B cell (primary cell): ENCODE measurements at regions of chr1 and their contacts with region 1.

Region 1: GRCh38 chr1:9128520-9129265 is at the start of gene GPR157:
- DNase-seq: peak; percentile 90
- ATAC-seq: peak; percentile 88
- H3K4me3 ChIP-seq: peak within 1 kb of the TSS; percentile 44 to 79 (median 61)
- H3K4me3 Mint-ChIP-seq: peak within 1 kb of the TSS; percentile 94
- H3K27ac ChIP-seq: peak within 1 kb of the TSS; percentile 38 to 48
- H3K27ac Mint-ChIP-seq: peak within 1 kb of the TSS; percentile 78
- H3K4me1 ChIP-seq: peaks cover 17 to 29% of the 10 kb centered on the region in 2 donors
- H3K4me1 Mint-ChIP-seq: peaks cover 44% of the 10 kb centered on the region
- H3K27me3 ChIP-seq: no peaks in the 10 kb centered on the region
- H3K27me3 Mint-ChIP-seq: no peaks in the 10 kb centered on the region
- CTCF ChIP-seq: no peak
- total RNA-seq, gene GPR157: 19.9 and 21.2 TPM in 2 replicates

Region 2: GRCh38 chr1:9110669-9111356 is 17.9 kb before region 1 on chr1:
- CTCF ChIA-PET with region 1: interaction called, 12 read pairs
- POLR2A ChIA-PET with region 1: no interaction called
- intact Hi-C with region 1: loop called (anchors 2 kb)
- DNase-seq: peak; percentile 85
- ATAC-seq: peak; percentile 95
- H3K4me3 ChIP-seq: no peak overlapping the region
- H3K4me3 Mint-ChIP-seq: no peak overlapping the region
- H3K27ac ChIP-seq: no peak overlapping the region
- H3K27ac Mint-ChIP-seq: no peak overlapping the region
- H3K4me1 ChIP-seq: peaks cover 0 to 5% of the 10 kb centered on the region in 2 donors
- H3K4me1 Mint-ChIP-seq: peaks cover 2% of the 10 kb centered on the region
- H3K27me3 ChIP-seq: no peaks in the 10 kb centered on the region
- H3K27me3 Mint-ChIP-seq: no peaks in the 10 kb centered on the region
- CTCF ChIP-seq: peak; percentile 91

Region 3: DNA sequence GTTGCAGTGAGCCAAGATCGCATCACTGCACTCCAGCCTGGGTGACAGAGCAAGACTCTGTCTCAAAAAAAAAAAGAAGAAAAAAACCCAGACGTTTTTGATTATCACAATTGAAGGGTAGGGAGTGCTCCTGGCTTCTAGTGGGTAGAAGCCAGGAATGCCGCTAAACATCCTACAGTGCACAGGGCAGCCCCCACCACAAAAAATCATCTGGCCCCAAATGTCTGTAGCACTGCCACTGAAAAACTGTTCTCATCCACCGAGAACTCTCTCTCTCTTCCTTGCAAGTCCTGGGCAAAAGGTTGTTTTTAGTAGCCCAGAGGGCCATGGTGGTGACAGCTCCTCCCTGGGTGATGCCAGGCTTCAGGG is 35.8 kb after region 1 on chr1:
- CTCF ChIA-PET with region 1: interaction called, 4 read pairs
- POLR2A ChIA-PET with region 1: no interaction called
- intact Hi-C with region 1: loop called (anchors 2 kb)
- DNase-seq: no peak
- ATAC-seq: peak; percentile 19
- H3K4me3 ChIP-seq: no peak overlapping the region
- H3K4me3 Mint-ChIP-seq: peak overlapping the region; percentile 81
- H3K27ac ChIP-seq: no peak overlapping the region
- H3K27ac Mint-ChIP-seq: peak overlapping the region; percentile 93
- H3K4me1 ChIP-seq: peaks cover 0 to 20% of the 10 kb centered on the region in 2 donors
- H3K4me1 Mint-ChIP-seq: peaks cover 22% of the 10 kb centered on the region
- H3K27me3 ChIP-seq: no peaks in the 10 kb centered on the region
- H3K27me3 Mint-ChIP-seq: peaks cover 2% of the 10 kb centered on the region
- CTCF ChIP-seq: no peak

Region 4: GRCh38 chr1:9196129-9197040 is 67.7 kb after region 1 on chr1:
- CTCF ChIA-PET with region 1: interaction called, 8 read pairs
- POLR2A ChIA-PET with region 1: no interaction called
- intact Hi-C with region 1: loop called (anchors 5 kb)
- DNase-seq: peak; percentile 81
- ATAC-seq: peak; percentile 78
- H3K4me3 ChIP-seq: no peak overlapping the region
- H3K4me3 Mint-ChIP-seq: peak overlapping the region; percentile 16
- H3K27ac ChIP-seq: no peak overlapping the region
- H3K27ac Mint-ChIP-seq: no peak overlapping the region
- H3K4me1 ChIP-seq: peaks cover 7 to 13% of the 10 kb centered on the region in 2 donors
- H3K4me1 Mint-ChIP-seq: peaks cover 31% of the 10 kb centered on the region
- H3K27me3 ChIP-seq: peaks cover 0 to 38% (median 22%) of the 10 kb centered on the region in 4 experiments
- H3K27me3 Mint-ChIP-seq: peaks cover 32% of the 10 kb centered on the region
- CTCF ChIP-seq: peak; percentile 84

Region 5: DNA sequence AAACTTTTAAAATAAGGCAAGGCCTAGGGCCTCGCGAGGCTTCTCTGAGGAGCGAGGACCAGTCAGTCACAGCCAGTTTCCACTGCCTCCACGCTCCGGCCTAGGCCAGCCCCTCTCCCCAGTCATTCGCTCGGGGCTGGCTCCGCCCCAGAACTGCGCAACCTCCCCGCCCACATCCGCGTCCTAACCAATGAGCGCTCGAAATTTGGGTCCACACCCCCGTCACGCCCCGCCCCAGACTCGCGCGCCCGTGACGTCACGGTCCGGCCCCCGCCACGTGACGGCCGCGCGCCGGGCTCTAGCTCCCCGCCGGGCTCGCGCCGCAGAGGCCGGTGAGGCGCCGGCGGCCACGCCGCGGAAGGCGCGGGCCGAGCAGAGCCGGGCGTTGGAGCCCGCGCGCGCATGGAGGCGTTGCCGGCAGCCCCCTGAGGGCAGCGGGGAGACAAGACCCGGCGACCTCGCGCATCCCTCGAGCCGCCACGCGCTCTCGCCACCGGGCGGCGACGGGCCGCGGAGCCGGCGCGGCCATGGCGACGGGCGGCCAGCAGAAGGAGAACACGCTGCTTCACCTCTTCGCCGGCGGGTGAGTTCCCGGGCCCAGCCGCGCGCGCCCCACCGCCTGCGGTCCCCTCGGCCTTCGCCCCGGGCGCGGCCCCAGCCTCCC is 410.6 kb after region 1 on chr1 and contains the start of gene SLC25A33:
- CTCF ChIA-PET with region 1: no interaction called
- POLR2A ChIA-PET with region 1: no interaction called
- intact Hi-C with region 1: loop called (anchors 1 kb)
- DNase-seq: peak; percentile 99
- ATAC-seq: peak; percentile 97
- H3K4me3 ChIP-seq: peak within 1 kb of the TSS; percentile 24 to 80 (median 73)
- H3K4me3 Mint-ChIP-seq: peak within 1 kb of the TSS; percentile 97
- H3K27ac ChIP-seq: peak within 1 kb of the TSS; percentile 78 to 90
- H3K27ac Mint-ChIP-seq: peak within 1 kb of the TSS; percentile 98
- H3K4me1 ChIP-seq: peaks cover 12 to 16% of the 10 kb centered on the region in 2 donors
- H3K4me1 Mint-ChIP-seq: peaks cover 29% of the 10 kb centered on the region
- H3K27me3 ChIP-seq: no peaks in the 10 kb centered on the region
- H3K27me3 Mint-ChIP-seq: no peaks in the 10 kb centered on the region
- CTCF ChIP-seq: no peak
- total RNA-seq, gene SLC25A33: 5.0 and 5.9 TPM in 2 replicates